Activated naive CD4-positive, alpha-beta T cell treated with anti-CD3 and anti-CD28 coated beads, Interleukin-2, amount 10 ng/mL, durations not matched to agents 7 days and 5 days (primary cell): ENCODE measurements at regions of chr13 and their contacts with region 1.

Region 1: GRCh38 chr13:26482451-26483197 is 74.9 kb upstream of the WASF3 start:
- DNase-seq: peak; percentile 79
- H3K4me3 Mint-ChIP-seq: no peak overlapping the region
- H3K27ac Mint-ChIP-seq: peak overlapping the region; percentile 19
- H3K4me1 Mint-ChIP-seq: peaks cover 11% of the 10 kb centered on the region
- H3K27me3 Mint-ChIP-seq: peaks cover 6% of the 10 kb centered on the region

Region 2: GRCh38 chr13:26465514-26465913 is 17.1 kb before region 1 on chr13:
- CTCF ChIA-PET with region 1: no interaction called
- DNase-seq: no peak
- H3K4me3 Mint-ChIP-seq: no peak overlapping the region
- H3K27ac Mint-ChIP-seq: no peak overlapping the region
- H3K4me1 Mint-ChIP-seq: no peaks in the 10 kb centered on the region
- H3K27me3 Mint-ChIP-seq: peaks cover 21% of the 10 kb centered on the region

Region 3: GRCh38 chr13:26494571-26495195 is 12.1 kb after region 1 on chr13:
- CTCF ChIA-PET with region 1: interaction called, 15 read pairs
- DNase-seq: no peak
- H3K4me3 Mint-ChIP-seq: no peak overlapping the region
- H3K27ac Mint-ChIP-seq: no peak overlapping the region
- H3K4me1 Mint-ChIP-seq: no peaks in the 10 kb centered on the region
- H3K27me3 Mint-ChIP-seq: peaks cover 5% of the 10 kb centered on the region

Region 4: GRCh38 chr13:26698392-26699196 is 216.0 kb after region 1 on chr13:
- CTCF ChIA-PET with region 1: interaction called, 27 read pairs
- DNase-seq: peak; percentile 83
- H3K4me3 Mint-ChIP-seq: no peak overlapping the region
- H3K27ac Mint-ChIP-seq: no peak overlapping the region
- H3K4me1 Mint-ChIP-seq: no peaks in the 10 kb centered on the region
- H3K27me3 Mint-ChIP-seq: peaks cover 11% of the 10 kb centered on the region

Region 5: GRCh38 chr13:26759907-26760834 is 277.5 kb after region 1 on chr13 and contains the start of gene GPR12:
- CTCF ChIA-PET with region 1: no interaction called
- DNase-seq: no peak
- H3K4me3 Mint-ChIP-seq: no peak within 1 kb of the TSS
- H3K27ac Mint-ChIP-seq: no peak within 1 kb of the TSS
- H3K4me1 Mint-ChIP-seq: peaks cover 7% of the 10 kb centered on the region
- H3K27me3 Mint-ChIP-seq: peaks cover 54% of the 10 kb centered on the region

Region 6: GRCh38 chr13:26813321-26813979 is 330.8 kb after region 1 on chr13:
- CTCF ChIA-PET with region 1: no interaction called
- DNase-seq: no peak
- H3K4me3 Mint-ChIP-seq: no peak overlapping the region
- H3K27ac Mint-ChIP-seq: no peak overlapping the region
- H3K4me1 Mint-ChIP-seq: no peaks in the 10 kb centered on the region
- H3K27me3 Mint-ChIP-seq: peaks cover 18% of the 10 kb centered on the region

Region 7: GRCh38 chr13:27035982-27036981 is 553.7 kb after region 1 on chr13:
- CTCF ChIA-PET with region 1: no interaction called
- DNase-seq: no peak
- H3K4me3 Mint-ChIP-seq: no peak overlapping the region
- H3K27ac Mint-ChIP-seq: no peak overlapping the region
- H3K4me1 Mint-ChIP-seq: peaks cover 8% of the 10 kb centered on the region
- H3K27me3 Mint-ChIP-seq: peaks cover 47% of the 10 kb centered on the region